ENCODE measurements at regions of chr14 and their contacts with region 1.

Region 1: GRCh38 chr14:61178226-61179060 is 102.7 kb downstream of the TMEM30B start:
- DNase-seq: no peak
- H3K4me3 Mint-ChIP-seq: peak overlapping the region; percentile 61
- H3K27ac Mint-ChIP-seq: peak overlapping the region; percentile 87
- H3K4me1 Mint-ChIP-seq: peaks cover 53% of the 10 kb centered on the region
- H3K27me3 Mint-ChIP-seq: no peaks in the 10 kb centered on the region

Region 2: GRCh38 chr14:60862286-60862685 is 316.2 kb before region 1 on chr14:
- intact Hi-C with region 1: loop called (anchors 5 kb)
- DNase-seq: no peak
- H3K4me3 Mint-ChIP-seq: no peak overlapping the region
- H3K27ac Mint-ChIP-seq: no peak overlapping the region
- H3K4me1 Mint-ChIP-seq: peaks cover 7% of the 10 kb centered on the region
- H3K27me3 Mint-ChIP-seq: peaks cover 8% of the 10 kb centered on the region

Region 3: GRCh38 chr14:60980811-60981632 is 197.4 kb before region 1 on chr14 and contains the starts of genes SLC38A6 and TRMT5:
- intact Hi-C with region 1: loop called (anchors 5 kb)
- DNase-seq: peak; percentile 88
- H3K4me3 Mint-ChIP-seq: no peak within 1 kb of the TSS
- H3K27ac Mint-ChIP-seq: no peak within 1 kb of the TSS
- H3K4me1 Mint-ChIP-seq: peaks cover 28% of the 10 kb centered on the region
- H3K27me3 Mint-ChIP-seq: no peaks in the 10 kb centered on the region
- total RNA-seq, gene SLC38A6: 4.6 and 5.2 TPM in 2 replicates
- total RNA-seq, gene TRMT5: 14.1 and 15.5 TPM in 2 replicates

Region 4: DNA sequence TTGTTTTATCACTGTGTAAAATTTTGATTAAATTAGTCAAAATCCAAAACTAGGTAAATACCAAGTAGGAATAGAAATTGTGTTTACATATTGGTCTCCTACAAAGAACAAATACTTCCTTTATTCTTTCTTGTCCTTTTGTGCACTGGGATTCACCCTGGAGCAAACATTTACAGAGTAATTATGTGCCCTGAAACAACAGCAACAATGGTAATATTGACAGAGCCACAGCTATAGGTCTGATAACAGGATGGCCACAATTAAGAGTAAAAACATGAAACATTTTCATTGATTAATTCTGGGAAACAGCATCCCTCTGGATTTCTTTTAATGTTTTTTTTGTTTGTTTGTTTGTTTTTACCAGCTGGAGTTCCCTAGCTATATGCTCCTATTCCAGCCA is 136.2 kb before region 1 on chr14:
- intact Hi-C with region 1: loop called (anchors 5 kb)
- DNase-seq: no peak
- H3K4me3 Mint-ChIP-seq: no peak overlapping the region
- H3K27ac Mint-ChIP-seq: no peak overlapping the region
- H3K4me1 Mint-ChIP-seq: peaks cover 20% of the 10 kb centered on the region
- H3K27me3 Mint-ChIP-seq: no peaks in the 10 kb centered on the region

Region 5: DNA sequence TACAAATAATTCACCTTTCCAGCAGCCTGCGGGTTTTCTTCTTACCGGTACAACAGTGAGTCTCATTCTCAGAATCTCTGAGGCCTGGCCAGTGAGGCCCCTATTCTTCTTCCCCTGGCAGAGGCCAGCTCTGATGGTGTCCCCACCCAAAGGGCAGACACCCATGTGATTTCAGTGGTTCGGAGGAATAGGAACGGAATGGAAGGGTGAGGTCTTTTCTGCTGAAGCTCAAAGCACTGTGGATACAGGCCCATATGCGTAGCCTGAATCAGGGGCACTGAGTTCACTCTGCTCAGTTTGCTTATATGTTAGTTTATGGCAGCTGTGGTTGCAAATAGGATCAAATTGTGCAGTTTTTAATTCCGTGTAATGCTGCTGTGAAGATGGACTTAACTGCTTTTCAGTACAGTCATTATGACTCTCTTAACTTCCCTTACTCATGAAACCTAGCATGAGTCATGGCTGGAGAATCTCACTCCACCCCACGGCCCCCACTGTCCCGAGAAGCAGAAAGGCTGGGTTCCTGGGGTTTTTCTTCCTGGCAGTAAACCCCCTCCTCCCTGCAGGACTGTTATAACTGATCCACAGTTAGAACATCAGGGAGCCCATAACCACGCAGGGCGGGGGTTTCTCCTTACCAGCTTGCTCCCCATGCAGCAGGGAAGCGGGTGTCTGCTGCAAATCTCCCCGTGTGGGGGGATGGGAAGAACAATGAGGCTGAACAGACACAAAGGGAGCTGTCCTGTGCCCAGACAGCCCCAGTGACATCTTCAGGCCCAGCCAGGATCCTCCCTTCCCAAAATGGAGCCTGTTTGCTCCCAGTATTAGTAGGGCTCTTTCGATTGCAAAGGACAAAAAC is 74.7 kb before region 1 on chr14:
- intact Hi-C with region 1: loop called (anchors 2 kb)
- DNase-seq: peak; percentile 17
- H3K4me3 Mint-ChIP-seq: peak overlapping the region; percentile 26
- H3K27ac Mint-ChIP-seq: peak overlapping the region; percentile 85
- H3K4me1 Mint-ChIP-seq: peaks cover 32% of the 10 kb centered on the region
- H3K27me3 Mint-ChIP-seq: no peaks in the 10 kb centered on the region

Region 6: GRCh38 chr14:61121355-61121787 is 57.1 kb before region 1 on chr14:
- intact Hi-C with region 1: loop called (anchors 5 kb)
- DNase-seq: no peak
- H3K4me3 Mint-ChIP-seq: no peak overlapping the region
- H3K27ac Mint-ChIP-seq: no peak overlapping the region
- H3K4me1 Mint-ChIP-seq: peaks cover 12% of the 10 kb centered on the region
- H3K27me3 Mint-ChIP-seq: peaks cover 3% of the 10 kb centered on the region

Region 7: GRCh38 chr14:61234215-61234916 is 55.9 kb after region 1 on chr14:
- intact Hi-C with region 1: loop called (anchors 5 kb)
- DNase-seq: no peak
- H3K4me3 Mint-ChIP-seq: no peak overlapping the region
- H3K27ac Mint-ChIP-seq: no peak overlapping the region
- H3K4me1 Mint-ChIP-seq: peaks cover 7% of the 10 kb centered on the region
- H3K27me3 Mint-ChIP-seq: peaks cover 10% of the 10 kb centered on the region

Measured in activated T-helper 2 cell treated with anti-CD3 and anti-CD28 coated beads, Interferon-gamma antibody, Interleukin-2, Interleukin-4, amounts not matched to agents 10 μg/mL and 5 μg/mL and 100 μg/mL, durations not matched to agents 14 hours and 24 hours and 36 hours (primary cell).